Calu3 (cell line): ENCODE measurements at regions of chr14 and their contacts with region 1.

Region 1: DNA sequence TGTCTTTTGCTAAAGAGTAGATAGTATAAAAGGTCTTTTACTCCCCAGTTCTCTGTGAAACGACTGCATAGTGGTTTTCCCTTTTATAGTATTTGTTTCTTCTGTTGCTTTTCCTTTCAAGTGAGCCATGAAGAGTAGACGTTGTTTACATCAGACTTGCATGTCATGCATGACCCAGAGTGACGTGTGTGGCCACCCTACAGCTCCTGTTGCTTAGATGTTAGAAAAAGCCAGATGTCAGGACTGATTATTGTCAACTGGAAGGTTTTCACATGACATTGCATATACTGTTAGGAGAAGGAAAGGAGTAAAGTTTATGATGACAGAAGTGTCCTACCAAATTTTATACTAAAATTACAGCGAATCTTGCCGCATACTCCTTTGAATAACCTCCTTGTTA is 1.3 kb upstream of the RD3L start:
- DNase-seq: no peak
- H3K4me3 Mint-ChIP-seq: no peak overlapping the region
- H3K27ac Mint-ChIP-seq: no peak overlapping the region
- H3K4me1 Mint-ChIP-seq: no peaks in the 10 kb centered on the region
- H3K27me3 Mint-ChIP-seq: peaks cover 33% of the 10 kb centered on the region
- CTCF ChIP-seq: no peak

Region 2: GRCh38 chr14:103091041-103091882 is 852.4 kb before region 1 on chr14:
- CTCF ChIA-PET with region 1: no interaction called
- intact Hi-C with region 1: no loop called
- DNase-seq: peak; percentile 75
- H3K4me3 Mint-ChIP-seq: peak overlapping the region; percentile 24
- H3K27ac Mint-ChIP-seq: no peak overlapping the region
- H3K4me1 Mint-ChIP-seq: peaks cover 15% of the 10 kb centered on the region
- H3K27me3 Mint-ChIP-seq: no peaks in the 10 kb centered on the region
- CTCF ChIP-seq: peak; percentile 68

Region 3: DNA sequence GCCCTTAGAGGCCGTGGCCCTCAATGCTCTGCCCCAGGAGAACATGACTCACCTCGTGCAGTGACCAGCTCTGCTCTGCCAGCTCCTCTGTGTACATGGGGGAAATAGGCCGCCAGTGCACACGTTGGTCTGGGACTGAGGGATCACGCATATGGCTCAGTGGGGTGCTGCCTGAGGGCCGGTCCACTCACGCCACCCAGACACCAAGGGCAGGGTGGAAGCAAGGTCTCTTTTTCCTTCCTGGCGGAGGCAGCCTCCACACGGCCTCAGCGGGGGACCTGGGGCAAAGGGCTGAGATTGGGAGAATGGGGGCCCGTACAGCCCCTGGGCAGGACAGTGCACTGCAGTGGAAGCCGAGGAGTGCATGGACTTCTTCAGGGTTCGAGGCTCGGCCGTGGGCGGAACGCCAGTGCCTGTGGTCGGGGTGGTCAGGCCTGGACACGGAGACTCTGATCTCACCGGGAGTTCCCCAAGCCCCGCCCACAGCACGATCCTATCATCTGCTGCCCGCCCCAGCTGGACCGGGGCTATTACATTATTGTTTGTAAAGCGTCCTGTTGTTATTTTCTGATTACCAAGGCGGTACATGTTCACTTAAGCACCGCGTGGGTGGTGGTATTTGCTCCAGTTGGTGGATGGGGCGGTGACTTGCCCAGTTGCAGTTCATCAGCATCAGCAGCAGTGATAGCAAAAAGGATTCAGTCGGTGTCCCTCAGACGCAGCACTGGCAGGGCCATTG is 54.2 kb before region 1 on chr14:
- CTCF ChIA-PET with region 1: no interaction called
- intact Hi-C with region 1: no loop called
- DNase-seq: peak; percentile 39
- H3K4me3 Mint-ChIP-seq: no peak overlapping the region
- H3K27ac Mint-ChIP-seq: no peak overlapping the region
- H3K4me1 Mint-ChIP-seq: peaks cover 18% of the 10 kb centered on the region
- H3K27me3 Mint-ChIP-seq: no peaks in the 10 kb centered on the region
- CTCF ChIP-seq: no peak

Region 4: GRCh38 chr14:103984196-103984595 is 40.5 kb after region 1 on chr14:
- CTCF ChIA-PET with region 1: no interaction called
- intact Hi-C with region 1: loop called (anchors 5 kb)
- DNase-seq: no peak
- H3K4me3 Mint-ChIP-seq: no peak overlapping the region
- H3K27ac Mint-ChIP-seq: no peak overlapping the region
- H3K4me1 Mint-ChIP-seq: peaks cover 7% of the 10 kb centered on the region
- H3K27me3 Mint-ChIP-seq: peaks cover 49% of the 10 kb centered on the region
- CTCF ChIP-seq: no peak